Colonic mucosa (tissue), 4 donors: ENCODE measurements at regions of chr1 and their contacts with region 1.

Region 1: GRCh38 chr1:27816921-27817630 is 13.5 kb upstream of the PPP1R8 start:
- DNase-seq: peak; percentile 30
- H3K4me3 ChIP-seq: no peak overlapping the region
- H3K27ac ChIP-seq: peak overlapping the region; percentile 37
- H3K4me1 ChIP-seq: no peaks in the 10 kb centered on the region
- H3K27me3 ChIP-seq: no peaks in the 10 kb centered on the region
- CTCF ChIP-seq: no peak

Region 2: DNA sequence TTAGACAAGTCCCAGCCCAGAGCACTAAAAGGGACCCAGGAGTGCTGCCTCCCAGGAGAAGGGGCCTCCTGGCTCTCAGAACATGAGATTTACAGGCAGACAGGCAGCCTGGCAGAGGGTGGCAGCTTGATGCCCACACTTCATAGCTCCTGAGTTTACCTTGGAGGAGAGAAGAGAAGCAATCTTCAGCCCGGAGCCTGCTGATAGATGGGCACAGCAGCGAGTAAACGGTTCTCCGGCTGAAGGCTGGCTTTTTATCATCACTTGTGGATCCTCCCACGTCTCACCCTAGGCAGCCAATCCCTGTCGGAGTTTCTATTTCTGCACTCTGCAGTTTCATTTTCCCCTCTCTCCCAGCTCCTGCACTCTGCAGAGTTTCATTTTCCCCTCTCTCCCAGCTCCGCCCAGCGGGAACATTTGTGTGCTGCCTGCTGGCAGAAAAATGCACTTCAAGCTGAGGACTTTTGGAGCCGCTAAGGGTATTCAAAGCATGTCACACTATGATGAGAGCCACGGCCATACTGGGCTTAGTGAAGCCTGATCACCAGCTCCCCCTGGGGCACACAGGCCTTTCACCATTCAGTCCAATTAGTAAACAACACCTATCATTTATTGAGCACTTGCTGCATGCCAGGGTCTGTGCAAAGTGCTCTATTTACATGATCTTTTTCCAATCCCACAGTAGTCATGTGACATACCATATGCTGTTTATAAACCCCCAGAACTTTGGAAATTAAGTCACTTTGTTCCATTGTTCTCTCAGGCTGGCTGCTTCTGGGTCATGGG is 144.9 kb before region 1 on chr1 and contains the start of gene IFI6:
- intact Hi-C with region 1: loop called (anchors 10 kb)
- DNase-seq: peak; percentile 91
- H3K4me3 ChIP-seq: peak within 1 kb of the TSS; percentile 42
- H3K27ac ChIP-seq: peak within 1 kb of the TSS; percentile 83
- H3K4me1 ChIP-seq: peaks cover 17% of the 10 kb centered on the region
- H3K27me3 ChIP-seq: no peaks in the 10 kb centered on the region
- CTCF ChIP-seq: peak; percentile 39
- total RNA-seq, gene IFI6: 18.0 to 25.1 TPM

Region 3: GRCh38 chr1:27772933-27773825 is 43.9 kb before region 1 on chr1 and contains the start of gene STX12:
- intact Hi-C with region 1: loop called (anchors 10 kb)
- DNase-seq: peak; percentile 99
- H3K4me3 ChIP-seq: peak within 1 kb of the TSS; percentile 98
- H3K27ac ChIP-seq: peak within 1 kb of the TSS; percentile 90
- H3K4me1 ChIP-seq: peaks cover 6% of the 10 kb centered on the region
- H3K27me3 ChIP-seq: no peaks in the 10 kb centered on the region
- CTCF ChIP-seq: no peak
- total RNA-seq, gene STX12: 49.2 to 65.0 TPM